ENCODE measurements at regions of chr17 and their contacts with region 1.

Region 1: GRCh38 chr17:73465675-73466230 is 154.0 kb upstream of the CDC42EP4 start:
- DNase-seq: no peak
- H3K4me3 ChIP-seq: no peak overlapping the region
- H3K27ac ChIP-seq: no peak overlapping the region
- H3K4me1 ChIP-seq: no peaks in the 10 kb centered on the region
- H3K27me3 ChIP-seq: no peaks in the 10 kb centered on the region
- CTCF ChIP-seq: no peak
- POLR2A ChIP-seq: no peak

Region 2: GRCh38 chr17:73410586-73411312 is 55.0 kb before region 1 on chr17:
- intact Hi-C with region 1: loop called (anchors 2 kb)
- DNase-seq: no peak
- H3K4me3 ChIP-seq: no peak overlapping the region
- H3K27ac ChIP-seq: peak overlapping the region in 1 of 2 donors; percentile 83
- H3K4me1 ChIP-seq: no peaks in the 10 kb centered on the region
- H3K27me3 ChIP-seq: no peaks in the 10 kb centered on the region
- CTCF ChIP-seq: no peak
- POLR2A ChIP-seq: no peak

Region 3: DNA sequence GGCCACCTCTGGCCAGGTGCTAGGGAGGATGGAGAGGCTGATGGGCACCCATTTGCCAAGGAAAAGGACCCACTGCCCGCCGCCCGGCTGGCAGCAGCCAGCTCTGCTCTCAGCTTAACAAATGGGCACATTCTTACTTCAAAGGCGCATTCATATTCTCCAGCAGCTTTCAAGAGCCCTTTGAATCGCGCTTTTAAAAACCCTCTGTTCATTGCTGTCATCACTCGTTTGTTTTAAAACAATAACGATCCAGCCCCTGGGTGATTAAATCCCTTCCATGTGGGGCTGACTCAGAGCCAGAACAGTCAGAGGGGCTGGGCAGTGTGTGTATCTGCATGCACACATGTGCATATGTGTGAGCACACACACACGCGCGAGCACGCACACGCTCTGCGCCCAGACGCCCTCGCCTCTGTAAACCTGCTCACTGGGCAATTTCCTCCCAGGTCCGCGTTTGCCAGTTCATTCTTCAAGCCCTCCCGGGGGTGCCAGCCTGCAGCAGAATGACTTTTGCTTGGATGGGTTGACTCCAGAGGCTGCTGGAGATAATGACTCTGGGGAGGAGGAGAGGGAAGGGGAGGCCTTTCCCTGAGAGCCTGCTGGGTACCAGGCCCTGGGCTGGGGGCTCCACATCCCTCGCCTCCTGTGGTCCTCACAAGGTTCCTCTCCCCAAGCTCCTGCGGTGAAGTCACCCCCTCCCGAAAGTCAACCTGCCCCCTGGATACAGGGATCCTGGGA is 45.4 kb after region 1 on chr17:
- intact Hi-C with region 1: no loop called
- DNase-seq: no peak
- H3K4me3 ChIP-seq: no peak overlapping the region
- H3K27ac ChIP-seq: no peak overlapping the region
- H3K4me1 ChIP-seq: no peaks in the 10 kb centered on the region
- H3K27me3 ChIP-seq: no peaks in the 10 kb centered on the region
- CTCF ChIP-seq: no peak
- POLR2A ChIP-seq: no peak

Region 4: GRCh38 chr17:73536700-73537605 is 71.2 kb after region 1 on chr17:
- intact Hi-C with region 1: no loop called
- DNase-seq: no peak
- H3K4me3 ChIP-seq: no peak overlapping the region
- H3K27ac ChIP-seq: no peak overlapping the region
- H3K4me1 ChIP-seq: no peaks in the 10 kb centered on the region
- H3K27me3 ChIP-seq: no peaks in the 10 kb centered on the region
- CTCF ChIP-seq: no peak
- POLR2A ChIP-seq: no peak

Region 5: GRCh38 chr17:73575470-73576221 is 109.9 kb after region 1 on chr17:
- intact Hi-C with region 1: no loop called
- DNase-seq: no peak
- H3K4me3 ChIP-seq: no peak overlapping the region
- H3K27ac ChIP-seq: no peak overlapping the region
- H3K4me1 ChIP-seq: no peaks in the 10 kb centered on the region
- H3K27me3 ChIP-seq: peaks cover 0 to 8% of the 10 kb centered on the region in 2 donors
- CTCF ChIP-seq: no peak
- POLR2A ChIP-seq: no peak

Measured in breast epithelium (tissue), 4 donors.